CD4-positive, alpha-beta memory T cell (primary cell): ENCODE measurements at regions of chr11 and their contacts with region 1.

Region 1: DNA sequence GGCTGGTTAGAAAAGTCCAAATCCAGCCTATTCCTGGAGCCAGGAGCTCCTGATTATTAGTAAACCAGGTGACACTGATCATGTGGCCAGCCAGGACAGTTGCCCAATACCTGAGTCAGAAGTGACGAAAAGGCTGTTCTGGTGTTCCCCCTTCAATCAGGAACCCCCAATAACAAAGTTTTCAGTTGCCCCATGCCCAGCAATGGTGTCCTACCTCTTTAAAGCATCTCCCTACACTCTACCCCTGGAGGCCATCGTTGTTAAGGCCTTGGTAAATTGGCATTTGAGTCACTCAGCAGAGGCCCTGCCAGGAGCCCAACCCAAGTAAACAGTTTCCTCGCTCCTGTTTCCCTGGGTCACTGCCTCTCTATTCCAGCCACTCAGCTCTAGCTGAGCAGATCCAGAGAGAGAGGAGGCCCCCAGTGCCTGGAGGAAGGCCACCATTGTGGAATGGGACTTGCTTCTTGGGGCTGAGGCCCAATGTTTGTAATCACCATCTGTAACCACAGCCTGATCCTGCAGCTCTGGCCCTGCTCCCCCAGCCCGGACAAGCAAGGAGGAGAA is 25.0 kb downstream of the ARHGAP1 start:
- DNase-seq: no peak
- H3K4me3 ChIP-seq: no peak overlapping the region
- H3K4me3 Mint-ChIP-seq: peak overlapping the region in 3 of 8 donors; percentile 5 to 76 (median 75)
- H3K27ac ChIP-seq: peak overlapping the region; percentile 20
- H3K27ac Mint-ChIP-seq: peak overlapping the region in 6 of 7 donors; percentile 27 to 97 (median 94)
- H3K4me1 ChIP-seq: peaks cover 71% of the 10 kb centered on the region
- H3K4me1 Mint-ChIP-seq: peaks cover 41 to 79% (median 66%) of the 10 kb centered on the region in 4 donors
- H3K27me3 ChIP-seq: no peaks in the 10 kb centered on the region
- H3K27me3 Mint-ChIP-seq: no peaks in the 10 kb centered on the region

Region 2: DNA sequence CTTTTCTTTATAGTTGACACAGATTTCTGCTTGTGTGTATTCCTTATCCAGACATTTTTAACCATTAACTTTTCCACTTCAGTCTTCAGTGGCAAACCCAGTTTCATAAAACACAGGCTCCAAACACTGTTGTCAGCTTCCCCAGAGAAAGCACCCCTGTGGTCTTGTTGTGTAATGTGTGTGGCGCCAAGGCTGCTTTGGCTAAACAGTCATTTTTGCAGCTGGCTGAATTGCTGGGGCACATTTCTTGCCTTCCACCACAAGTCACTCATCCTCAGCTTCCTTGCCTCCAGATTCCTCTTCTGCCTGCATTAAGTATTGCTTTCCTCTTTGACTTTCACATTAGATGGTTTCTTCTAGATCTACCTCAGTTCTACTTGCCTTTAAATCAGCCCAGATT is 15.5 kb before region 1 on chr11:
- CTCF ChIA-PET with region 1: interaction called, 10 read pairs
- POLR2A ChIA-PET with region 1: interaction called, 10 read pairs
- intact Hi-C with region 1: no loop called
- DNase-seq: no peak
- H3K4me3 ChIP-seq: no peak overlapping the region
- H3K4me3 Mint-ChIP-seq: no peak overlapping the region
- H3K27ac ChIP-seq: no peak overlapping the region
- H3K27ac Mint-ChIP-seq: peak overlapping the region in 1 of 7 donors; percentile 4
- H3K4me1 ChIP-seq: no peaks in the 10 kb centered on the region
- H3K4me1 Mint-ChIP-seq: peaks cover 0 to 2% (median 0%) of the 10 kb centered on the region in 4 donors
- H3K27me3 ChIP-seq: no peaks in the 10 kb centered on the region
- H3K27me3 Mint-ChIP-seq: no peaks in the 10 kb centered on the region